Body of pancreas (tissue), 4 donors: ENCODE measurements at regions of chr7 and their contacts with region 1.

Region 1: GRCh38 chr7:100049441-100050311 is at the start of gene ZSCAN21:
- DNase-seq: peak; percentile 81 to 85 (median 84)
- ATAC-seq: peak; percentile 86
- H3K4me3 ChIP-seq: peak within 1 kb of the TSS; percentile 72 to 92
- H3K27ac ChIP-seq: peak within 1 kb of the TSS; percentile 85 to 98 (median 94)
- H3K4me1 ChIP-seq: peaks cover 27% of the 10 kb centered on the region
- H3K27me3 ChIP-seq: no peaks in the 10 kb centered on the region
- CTCF ChIP-seq: peak in 2 of 7 experiments; percentile 7 to 17
- POLR2A ChIP-seq: peak; percentile 66 to 93 (median 92)
- total RNA-seq, gene ZSCAN21: 14.5 to 20.2 TPM

Region 2: DNA sequence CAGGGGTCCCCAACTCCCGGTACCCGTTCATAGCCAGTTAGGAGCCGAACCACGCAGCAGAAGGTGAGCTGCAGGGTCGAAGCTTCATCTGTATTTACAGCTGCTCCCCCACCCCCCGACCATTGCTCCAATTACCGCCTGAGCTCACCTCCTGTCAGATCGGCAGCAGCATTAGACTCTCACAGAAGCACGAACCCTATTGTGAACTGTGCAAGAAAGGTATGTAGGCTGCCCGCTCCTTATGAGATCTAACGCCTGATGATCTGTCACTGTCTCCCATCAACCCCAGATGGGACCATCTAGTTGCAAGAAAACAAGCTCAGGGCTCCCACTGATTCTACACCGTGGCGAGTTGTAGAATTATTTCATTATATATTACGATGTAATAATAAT is 59.2 kb before region 1 on chr7:
- intact Hi-C with region 1: loop called (anchors 5 kb)
- DNase-seq: no peak
- ATAC-seq: no peak
- H3K4me3 ChIP-seq: no peak overlapping the region
- H3K27ac ChIP-seq: no peak overlapping the region
- H3K4me1 ChIP-seq: peaks cover 18% of the 10 kb centered on the region
- H3K27me3 ChIP-seq: no peaks in the 10 kb centered on the region
- CTCF ChIP-seq: no peak
- POLR2A ChIP-seq: no peak

Region 3: DNA sequence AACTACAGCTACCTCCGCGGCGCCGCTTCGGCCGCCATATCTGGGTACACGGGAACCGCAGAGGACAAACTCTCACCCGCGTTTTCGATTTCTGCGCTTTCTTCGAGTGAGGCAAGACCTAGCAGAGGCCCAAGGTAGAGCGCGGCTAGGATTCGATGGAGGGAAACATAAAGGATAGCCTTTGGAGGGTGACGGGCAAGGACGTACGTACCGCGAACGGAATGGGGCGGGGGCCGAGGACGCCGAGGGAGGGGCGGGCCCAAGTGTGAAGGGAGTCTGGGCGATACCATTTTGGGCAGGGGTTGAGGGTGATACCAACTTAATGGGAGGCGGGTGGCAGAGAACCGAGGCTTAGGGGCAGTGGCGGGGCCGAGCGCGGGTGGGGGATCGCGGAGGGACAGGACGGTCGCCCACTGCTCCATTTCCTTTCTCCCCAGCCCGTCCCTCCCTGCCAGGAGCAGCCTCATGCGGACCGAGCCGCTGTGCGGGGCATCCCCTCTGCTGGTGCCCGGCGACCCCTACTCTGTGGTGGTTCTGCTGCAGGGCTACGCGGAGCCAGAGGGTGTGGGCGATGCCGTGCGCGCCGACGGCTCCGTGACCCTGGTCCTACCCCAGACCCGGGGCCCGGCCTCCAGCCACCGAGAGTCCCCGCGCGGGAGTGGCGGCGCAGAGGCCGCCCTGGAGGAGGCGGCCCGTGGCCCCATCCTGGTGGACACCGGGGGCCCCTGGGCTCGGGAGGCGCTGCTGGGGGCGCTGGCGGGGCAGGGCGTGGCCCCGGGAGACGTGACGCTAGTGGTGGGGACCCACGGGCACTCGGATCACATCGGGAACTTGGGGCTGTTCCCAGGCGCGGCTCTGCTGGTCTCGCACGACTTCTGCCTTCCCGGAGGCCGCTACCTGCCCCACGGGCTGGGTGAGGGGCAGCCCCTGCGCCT is 77.5 kb after region 1 on chr7 and contains the start of gene MBLAC1:
- intact Hi-C with region 1: no loop called
- DNase-seq: peak; percentile 91 to 94 (median 93)
- ATAC-seq: peak; percentile 90
- H3K4me3 ChIP-seq: peak within 1 kb of the TSS; percentile 73 to 82
- H3K27ac ChIP-seq: peak within 1 kb of the TSS; percentile 94 to 99 (median 98)
- H3K4me1 ChIP-seq: peaks cover 42% of the 10 kb centered on the region
- H3K27me3 ChIP-seq: no peaks in the 10 kb centered on the region
- CTCF ChIP-seq: no peak
- POLR2A ChIP-seq: peak; percentile 12 to 73 (median 68)
- total RNA-seq, gene MBLAC1: 2.1 to 5.3 TPM